K562 (cell line): ENCODE measurements at regions of chr11 and their contacts with region 1.

Region 1: DNA sequence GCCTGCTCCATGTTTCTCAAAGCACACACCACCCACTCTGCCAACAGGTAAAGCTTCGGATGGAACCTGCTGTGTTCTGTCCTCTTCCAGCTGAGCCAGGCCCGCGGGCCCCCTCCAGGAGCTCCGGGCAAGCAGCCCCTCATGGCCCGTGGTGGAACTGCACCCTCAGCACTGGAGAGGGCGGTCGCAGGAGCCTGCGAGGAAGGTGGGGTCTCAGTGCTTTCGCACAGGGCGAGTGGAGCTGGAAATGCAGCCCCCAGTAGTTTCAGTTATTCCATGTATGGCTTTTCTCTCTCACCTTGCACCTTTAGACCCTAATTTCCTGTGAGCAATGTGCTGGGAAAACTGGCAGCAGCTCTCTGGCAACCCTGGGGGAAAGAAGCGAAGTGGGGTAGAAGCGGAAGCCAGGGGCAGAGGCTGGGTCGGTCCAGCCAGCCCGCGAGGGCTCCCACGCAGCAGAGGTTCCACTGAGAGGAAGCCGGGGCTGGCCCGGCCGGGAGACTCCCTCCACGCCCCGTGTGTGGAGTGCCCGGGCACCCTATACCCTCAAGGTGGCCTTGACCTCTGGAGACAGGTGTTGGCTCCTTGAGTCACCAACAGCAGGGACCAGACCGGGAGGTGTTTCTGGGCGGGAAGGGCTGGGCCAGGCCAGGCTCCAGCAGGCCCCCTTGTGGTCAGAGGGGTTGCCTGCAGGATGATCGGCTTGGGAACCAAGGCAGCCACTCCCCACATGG is 119.9 kb upstream of the TMEM45B start:
- DNase-seq: peak; percentile 67 to 72 (median 70)
- ATAC-seq: peak; percentile 96
- H3K4me3 ChIP-seq: no peak overlapping the region
- H3K27ac ChIP-seq: no peak overlapping the region
- H3K4me1 ChIP-seq: peaks cover 0 to 9% of the 10 kb centered on the region in 2 experiments; a peak in 3 of 5 replicates
- H3K27me3 ChIP-seq: peaks cover 0 to 18% of the 10 kb centered on the region in 2 experiments; a peak in 2 of 5 replicates
- CTCF ChIP-seq: peak; percentile 71 to 83 (median 81)
- EP300 ChIP-seq: no peak
- POLR2A ChIP-seq: no peak
- RAD21 ChIP-seq: peak; percentile 45 to 70

Region 2: GRCh38 chr11:129364143-129364654 is 331.5 kb before region 1 on chr11:
- CTCF ChIA-PET with region 1: no interaction called
- POLR2A ChIA-PET with region 1: no interaction called
- in situ Hi-C with region 1: no loop called
- intact Hi-C with region 1: loop called (anchors 1 kb)
- DNase-seq: peak; percentile 65 to 86 (median 70)
- ATAC-seq: peak; percentile 100
- H3K4me3 ChIP-seq: no peak overlapping the region
- H3K27ac ChIP-seq: no peak overlapping the region
- H3K4me1 ChIP-seq: no peaks in the 10 kb centered on the region
- H3K27me3 ChIP-seq: no peaks in the 10 kb centered on the region
- CTCF ChIP-seq: peak; percentile 99 to 100 (median 100)
- EP300 ChIP-seq: no peak
- POLR2A ChIP-seq: no peak
- RAD21 ChIP-seq: peak; percentile 84 to 89

Region 3: DNA sequence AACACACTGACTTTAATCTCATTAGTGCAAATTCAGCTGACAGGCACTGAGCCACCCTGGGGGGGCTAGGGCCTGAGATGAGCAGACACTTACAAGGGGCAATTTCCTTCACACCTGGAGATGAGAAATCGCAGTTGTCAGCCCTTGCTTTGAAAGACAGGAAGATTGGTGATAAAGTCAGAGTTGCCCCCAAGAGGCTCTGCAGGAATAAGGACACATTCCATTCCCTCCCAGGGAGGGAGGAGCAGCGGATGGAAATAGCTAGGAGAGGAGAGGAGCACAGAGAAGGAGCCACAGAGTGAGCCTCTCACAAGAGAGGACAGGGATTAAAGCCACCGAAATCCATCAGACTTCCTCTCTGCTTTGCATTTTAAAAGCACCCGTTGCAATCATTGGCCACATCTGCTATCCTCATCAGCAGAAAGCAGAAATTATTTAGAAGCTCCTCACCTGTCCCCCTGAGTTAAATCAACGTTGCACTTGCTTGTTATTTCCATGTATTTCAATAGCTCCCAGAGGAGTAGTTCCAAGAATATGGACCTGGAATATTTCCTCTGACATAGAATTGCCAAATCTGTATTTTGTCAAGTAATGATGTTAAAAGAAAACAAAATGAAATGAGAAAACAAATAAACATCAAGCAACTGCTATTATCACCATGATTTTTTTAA is 106.4 kb before region 1 on chr11:
- CTCF ChIA-PET with region 1: no interaction called
- POLR2A ChIA-PET with region 1: no interaction called
- in situ Hi-C with region 1: no loop called
- intact Hi-C with region 1: loop called (anchors 5 kb)
- DNase-seq: no peak
- ATAC-seq: no peak
- H3K4me3 ChIP-seq: no peak overlapping the region
- H3K27ac ChIP-seq: no peak overlapping the region
- H3K4me1 ChIP-seq: no peaks in the 10 kb centered on the region
- H3K27me3 ChIP-seq: peaks cover 0 to 8% of the 10 kb centered on the region in 2 experiments; a peak in 1 of 5 replicates
- CTCF ChIP-seq: no peak
- EP300 ChIP-seq: no peak
- POLR2A ChIP-seq: no peak
- RAD21 ChIP-seq: no peak

Region 4: GRCh38 chr11:129720156-129720684 is 24.5 kb after region 1 on chr11:
- CTCF ChIA-PET with region 1: no interaction called
- POLR2A ChIA-PET with region 1: no interaction called
- in situ Hi-C with region 1: no loop called
- intact Hi-C with region 1: no loop called
- DNase-seq: no peak
- ATAC-seq: no peak
- H3K4me3 ChIP-seq: no peak overlapping the region
- H3K27ac ChIP-seq: no peak overlapping the region
- H3K4me1 ChIP-seq: no peaks in the 10 kb centered on the region
- H3K27me3 ChIP-seq: peaks cover 15 to 44% of the 10 kb centered on the region in 2 experiments; a peak in 4 of 5 replicates
- CTCF ChIP-seq: no peak
- EP300 ChIP-seq: no peak
- POLR2A ChIP-seq: no peak
- RAD21 ChIP-seq: no peak